ENCODE measurements at regions of chr1 and their contacts with region 1.

Region 1: GRCh38 chr1:234499119-234499942 is 20.4 kb upstream of the TARBP1 start:
- DNase-seq: peak; percentile 65 to 90 (median 81)
- ATAC-seq: peak; percentile 98
- H3K4me3 ChIP-seq: no peak overlapping the region
- H3K4me3 Mint-ChIP-seq: no peak overlapping the region
- H3K27ac ChIP-seq: no peak overlapping the region
- H3K27ac Mint-ChIP-seq: no peak overlapping the region
- H3K4me1 ChIP-seq: no peaks in the 10 kb centered on the region
- H3K4me1 Mint-ChIP-seq: peaks cover 8% of the 10 kb centered on the region
- H3K27me3 ChIP-seq: no peaks in the 10 kb centered on the region
- H3K27me3 Mint-ChIP-seq: peaks cover 4% of the 10 kb centered on the region
- CTCF ChIP-seq: peak; percentile 80

Region 2: GRCh38 chr1:234111458-234112142 is 387.7 kb before region 1 on chr1:
- CTCF ChIA-PET with region 1: no interaction called
- POLR2A ChIA-PET with region 1: no interaction called
- intact Hi-C with region 1: no loop called
- DNase-seq: no peak
- ATAC-seq: no peak
- H3K4me3 ChIP-seq: no peak overlapping the region
- H3K4me3 Mint-ChIP-seq: no peak overlapping the region
- H3K27ac ChIP-seq: no peak overlapping the region
- H3K27ac Mint-ChIP-seq: no peak overlapping the region
- H3K4me1 ChIP-seq: no peaks in the 10 kb centered on the region
- H3K4me1 Mint-ChIP-seq: peaks cover 5% of the 10 kb centered on the region
- H3K27me3 ChIP-seq: peaks cover 0 to 4% of the 10 kb centered on the region in 2 experiments
- H3K27me3 Mint-ChIP-seq: peaks cover 14% of the 10 kb centered on the region
- CTCF ChIP-seq: no peak

Region 3: DNA sequence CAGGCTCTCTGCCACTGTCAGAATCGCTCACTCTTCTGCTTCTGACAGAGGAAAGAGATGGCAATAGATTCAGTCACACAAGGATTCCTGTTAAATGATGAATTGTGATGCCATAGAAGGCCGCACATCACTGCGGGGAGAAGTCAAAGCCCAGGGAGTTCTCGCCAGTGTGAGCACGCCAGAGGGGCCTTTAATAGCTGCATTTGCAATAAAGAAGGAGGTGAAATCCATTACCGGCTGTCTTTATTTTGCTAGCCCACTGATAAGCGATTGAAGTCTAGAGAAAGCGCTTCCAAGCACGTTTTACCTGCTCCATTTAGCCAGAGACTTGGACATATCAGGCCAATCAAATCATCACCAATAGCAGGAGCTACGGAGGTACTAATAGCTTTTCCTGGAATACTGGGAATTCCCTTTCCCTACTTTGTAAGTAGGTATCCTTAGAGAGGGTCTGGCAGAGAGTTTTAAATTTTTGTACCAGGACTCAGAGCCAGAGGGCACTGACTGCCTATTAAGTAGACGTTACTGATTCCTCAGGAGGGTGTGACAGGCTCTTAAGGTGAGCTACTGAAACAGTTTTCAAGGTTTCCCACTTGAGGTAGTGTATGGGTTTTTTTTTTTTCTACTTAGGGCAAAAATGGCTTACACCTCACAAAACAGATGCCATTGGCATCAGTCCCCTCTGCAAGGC is 10.2 kb before region 1 on chr1:
- CTCF ChIA-PET with region 1: interaction called, 10 read pairs
- POLR2A ChIA-PET with region 1: no interaction called
- intact Hi-C with region 1: no loop called
- DNase-seq: no peak
- ATAC-seq: no peak
- H3K4me3 ChIP-seq: no peak overlapping the region
- H3K4me3 Mint-ChIP-seq: no peak overlapping the region
- H3K27ac ChIP-seq: no peak overlapping the region
- H3K27ac Mint-ChIP-seq: no peak overlapping the region
- H3K4me1 ChIP-seq: no peaks in the 10 kb centered on the region
- H3K4me1 Mint-ChIP-seq: peaks cover 21% of the 10 kb centered on the region
- H3K27me3 ChIP-seq: no peaks in the 10 kb centered on the region
- H3K27me3 Mint-ChIP-seq: peaks cover 6% of the 10 kb centered on the region
- CTCF ChIP-seq: no peak

Region 4: DNA sequence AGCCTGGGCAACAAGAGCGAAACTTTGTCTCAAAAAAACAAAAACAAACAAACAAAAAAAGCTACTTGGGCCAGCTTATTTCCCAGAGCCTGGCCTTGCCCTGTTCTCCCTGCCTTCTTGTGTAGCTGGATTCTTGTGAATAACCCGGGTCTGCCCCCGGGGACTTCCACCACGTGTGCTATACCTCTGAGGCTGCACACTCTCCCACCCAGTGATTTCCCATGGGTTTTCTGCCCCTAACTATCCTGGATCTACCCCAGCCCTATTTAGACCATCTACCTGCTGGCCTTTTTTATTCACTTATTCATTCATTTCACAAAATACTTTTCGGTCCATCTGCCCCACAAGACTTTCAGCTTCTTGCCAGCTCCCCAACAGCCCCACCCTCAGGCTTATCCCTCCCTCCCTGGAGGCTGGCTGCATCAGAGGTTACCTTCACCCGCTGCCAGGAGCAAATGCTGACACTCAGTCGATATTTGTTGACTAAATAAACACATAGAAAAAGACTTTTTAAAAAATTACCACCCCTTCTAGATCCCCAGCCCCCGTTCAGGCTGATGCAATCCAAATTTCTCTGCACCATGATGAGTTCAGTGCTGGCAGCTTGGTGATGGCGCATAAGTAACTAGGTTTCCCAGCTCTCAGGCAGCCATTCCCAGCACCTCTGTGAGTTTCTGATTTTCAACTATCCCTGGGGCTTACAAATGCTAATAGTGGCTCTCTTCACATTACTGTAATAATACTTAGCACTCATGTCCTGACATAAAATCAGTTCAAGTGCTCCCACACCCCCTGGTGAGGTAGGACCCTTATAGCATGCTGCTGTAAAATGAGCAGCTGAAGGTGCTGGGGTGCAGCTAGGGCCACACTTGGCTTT is 10.4 kb after region 1 on chr1:
- CTCF ChIA-PET with region 1: interaction called, 14 read pairs
- POLR2A ChIA-PET with region 1: no interaction called
- intact Hi-C with region 1: no loop called
- DNase-seq: no peak
- ATAC-seq: no peak
- H3K4me3 ChIP-seq: no peak overlapping the region
- H3K4me3 Mint-ChIP-seq: no peak overlapping the region
- H3K27ac ChIP-seq: no peak overlapping the region
- H3K27ac Mint-ChIP-seq: no peak overlapping the region
- H3K4me1 ChIP-seq: no peaks in the 10 kb centered on the region
- H3K4me1 Mint-ChIP-seq: no peaks in the 10 kb centered on the region
- H3K27me3 ChIP-seq: no peaks in the 10 kb centered on the region
- H3K27me3 Mint-ChIP-seq: peaks cover 8% of the 10 kb centered on the region
- CTCF ChIP-seq: no peak

Region 5: DNA sequence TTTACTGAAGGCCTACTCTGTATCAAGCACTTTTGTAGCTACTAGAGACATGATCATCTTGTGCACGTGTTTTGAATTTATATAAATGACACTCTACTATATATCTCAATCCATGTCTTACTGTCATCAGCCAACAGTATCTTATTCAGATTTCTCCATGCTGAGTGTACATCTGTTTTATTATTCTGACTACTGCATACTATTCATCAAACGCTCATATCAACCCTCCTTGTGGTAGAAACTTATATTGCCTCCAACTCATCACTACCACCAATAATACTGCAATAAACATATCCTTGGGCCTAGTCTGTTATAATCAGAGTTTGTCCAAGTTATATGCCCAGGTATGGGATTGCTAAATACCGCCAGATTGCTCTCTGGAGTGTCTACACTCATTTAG is 192.2 kb after region 1 on chr1:
- CTCF ChIA-PET with region 1: no interaction called
- POLR2A ChIA-PET with region 1: no interaction called
- intact Hi-C with region 1: loop called in 1 of 2 experiments (anchors 5 kb)
- DNase-seq: peak in 2 of 9 experiments; percentile 27 to 50
- ATAC-seq: peak; percentile 69
- H3K4me3 ChIP-seq: no peak overlapping the region
- H3K4me3 Mint-ChIP-seq: no peak overlapping the region
- H3K27ac ChIP-seq: no peak overlapping the region
- H3K27ac Mint-ChIP-seq: no peak overlapping the region
- H3K4me1 ChIP-seq: no peaks in the 10 kb centered on the region
- H3K4me1 Mint-ChIP-seq: no peaks in the 10 kb centered on the region
- H3K27me3 ChIP-seq: no peaks in the 10 kb centered on the region
- H3K27me3 Mint-ChIP-seq: no peaks in the 10 kb centered on the region
- CTCF ChIP-seq: peak; percentile 23

Region 6: DNA sequence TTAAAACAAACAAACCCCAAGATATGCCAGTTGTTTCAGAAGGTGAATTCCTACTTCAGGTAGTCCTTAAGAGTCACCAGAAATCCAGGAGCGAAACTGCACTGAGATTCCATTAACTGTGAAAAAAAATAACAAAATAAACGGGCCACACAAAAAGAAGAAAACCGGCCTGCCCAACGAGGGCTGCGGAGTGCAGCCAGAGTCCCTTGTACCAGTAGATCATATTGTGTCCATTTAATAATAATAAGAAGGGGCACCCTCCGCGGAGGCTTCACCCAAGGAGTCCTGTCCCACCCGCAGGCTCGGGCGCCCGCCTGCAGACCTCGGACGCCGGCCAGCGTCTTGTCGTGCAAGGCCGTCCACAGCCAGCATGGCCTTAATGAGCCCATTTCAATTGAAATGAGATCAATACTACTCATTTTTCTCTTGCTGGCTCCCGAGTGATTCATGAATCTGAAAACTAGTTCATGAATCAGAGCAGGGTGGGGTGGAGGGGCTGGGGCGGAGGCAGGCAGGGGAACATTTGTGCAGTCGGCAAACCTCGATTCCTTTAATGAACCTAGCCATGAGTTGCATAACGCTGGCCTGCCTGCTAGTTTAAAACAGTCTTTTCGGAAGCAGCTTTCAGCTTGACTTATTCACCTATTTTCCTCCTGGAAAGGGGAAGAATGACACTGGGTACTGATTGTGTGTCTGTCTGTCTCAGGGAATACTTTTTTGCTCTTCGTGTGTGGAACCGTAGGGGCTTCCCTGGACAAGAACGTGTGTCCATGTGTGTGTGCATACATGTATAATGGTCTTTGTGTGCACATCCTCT is 223.8 kb after region 1 on chr1:
- CTCF ChIA-PET with region 1: interaction called, 3 read pairs
- POLR2A ChIA-PET with region 1: no interaction called
- intact Hi-C with region 1: loop called in 1 of 2 experiments (anchors 1 kb)
- DNase-seq: peak in 8 of 9 experiments; percentile 37 to 76 (median 58)
- ATAC-seq: peak; percentile 26
- H3K4me3 ChIP-seq: peak overlapping the region; percentile 28 to 34
- H3K4me3 Mint-ChIP-seq: peak overlapping the region; percentile 71
- H3K27ac ChIP-seq: peak overlapping the region; percentile 83 to 96
- H3K27ac Mint-ChIP-seq: peak overlapping the region; percentile 92
- H3K4me1 ChIP-seq: peaks cover 38% of the 10 kb centered on the region
- H3K4me1 Mint-ChIP-seq: peaks cover 61% of the 10 kb centered on the region
- H3K27me3 ChIP-seq: no peaks in the 10 kb centered on the region
- H3K27me3 Mint-ChIP-seq: no peaks in the 10 kb centered on the region
- CTCF ChIP-seq: no peak

Region 7: GRCh38 chr1:235093696-235094592 is 594.6 kb after region 1 on chr1:
- CTCF ChIA-PET with region 1: interaction called, 33 read pairs
- POLR2A ChIA-PET with region 1: no interaction called
- intact Hi-C with region 1: no loop called
- DNase-seq: peak; percentile 74 to 90 (median 82)
- ATAC-seq: peak; percentile 100
- H3K4me3 ChIP-seq: no peak overlapping the region
- H3K4me3 Mint-ChIP-seq: no peak overlapping the region
- H3K27ac ChIP-seq: no peak overlapping the region
- H3K27ac Mint-ChIP-seq: no peak overlapping the region
- H3K4me1 ChIP-seq: peaks cover 3% of the 10 kb centered on the region
- H3K4me1 Mint-ChIP-seq: peaks cover 7% of the 10 kb centered on the region
- H3K27me3 ChIP-seq: peaks cover 0 to 4% of the 10 kb centered on the region in 2 experiments
- H3K27me3 Mint-ChIP-seq: peaks cover 15% of the 10 kb centered on the region
- CTCF ChIP-seq: peak; percentile 91

Measured in CD8-positive, alpha-beta T cell (primary cell).